ENCODE measurements at regions of chr1 and their contacts with region 1.

Region 1: GRCh38 chr1:39098546-39099250 is 72.5 kb downstream of the NDUFS5 start:
- DNase-seq: peak; percentile 30
- ATAC-seq: peak; percentile 22
- H3K4me3 Mint-ChIP-seq: no peak overlapping the region
- H3K27ac Mint-ChIP-seq: no peak overlapping the region
- H3K4me1 Mint-ChIP-seq: peaks cover 26% of the 10 kb centered on the region
- H3K27me3 Mint-ChIP-seq: no peaks in the 10 kb centered on the region
- CTCF ChIP-seq: no peak

Region 2: DNA sequence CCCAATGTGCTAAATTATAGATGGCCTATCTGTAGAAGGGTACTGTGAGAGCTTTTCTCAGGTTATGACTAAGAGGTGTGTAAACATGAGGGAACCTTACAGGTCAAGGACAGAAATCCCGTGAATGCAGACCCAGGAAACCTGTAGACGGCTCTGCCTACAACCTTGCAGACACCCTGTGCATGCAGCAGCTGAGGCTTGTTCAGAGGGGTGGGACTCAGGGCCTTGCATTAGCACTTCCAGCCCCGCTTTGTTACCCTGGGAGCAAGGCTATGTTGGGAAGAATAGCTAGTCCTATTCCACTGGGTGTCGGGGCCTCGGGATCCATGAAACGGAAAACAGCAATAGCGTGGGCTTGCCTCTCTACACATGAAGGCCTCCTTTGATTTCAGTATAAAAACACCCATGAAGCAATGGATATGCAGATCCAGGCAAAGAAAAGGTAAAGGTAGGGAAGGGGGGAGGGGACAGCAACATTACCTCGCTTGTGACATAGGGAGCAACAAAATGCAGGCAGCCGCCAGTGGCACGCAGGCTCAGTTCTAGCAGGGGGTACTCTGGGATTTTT is 82.0 kb before region 1 on chr1:
- CTCF ChIA-PET with region 1: no interaction called
- POLR2A ChIA-PET with region 1: no interaction called
- intact Hi-C with region 1: no loop called
- DNase-seq: no peak
- ATAC-seq: no peak
- H3K4me3 Mint-ChIP-seq: no peak overlapping the region
- H3K27ac Mint-ChIP-seq: no peak overlapping the region
- H3K4me1 Mint-ChIP-seq: no peaks in the 10 kb centered on the region
- H3K27me3 Mint-ChIP-seq: no peaks in the 10 kb centered on the region
- CTCF ChIP-seq: no peak

Region 3: GRCh38 chr1:39116868-39117728 is 18.4 kb after region 1 on chr1:
- CTCF ChIA-PET with region 1: interaction called, 7 read pairs
- POLR2A ChIA-PET with region 1: no interaction called
- intact Hi-C with region 1: loop called (anchors 2 kb)
- DNase-seq: no peak
- ATAC-seq: no peak
- H3K4me3 Mint-ChIP-seq: no peak overlapping the region
- H3K27ac Mint-ChIP-seq: no peak overlapping the region
- H3K4me1 Mint-ChIP-seq: no peaks in the 10 kb centered on the region
- H3K27me3 Mint-ChIP-seq: no peaks in the 10 kb centered on the region
- CTCF ChIP-seq: no peak

Region 4: GRCh38 chr1:39196244-39197215 is 97.8 kb after region 1 on chr1:
- CTCF ChIA-PET with region 1: interaction called, 86 read pairs
- POLR2A ChIA-PET with region 1: interaction called, 14 read pairs
- intact Hi-C with region 1: loop called (anchors 1 kb)
- DNase-seq: no peak
- ATAC-seq: peak; percentile 35
- H3K4me3 Mint-ChIP-seq: peak overlapping the region; percentile 61
- H3K27ac Mint-ChIP-seq: peak overlapping the region; percentile 91
- H3K4me1 Mint-ChIP-seq: peaks cover 76% of the 10 kb centered on the region
- H3K27me3 Mint-ChIP-seq: no peaks in the 10 kb centered on the region
- CTCF ChIP-seq: no peak

Region 5: DNA sequence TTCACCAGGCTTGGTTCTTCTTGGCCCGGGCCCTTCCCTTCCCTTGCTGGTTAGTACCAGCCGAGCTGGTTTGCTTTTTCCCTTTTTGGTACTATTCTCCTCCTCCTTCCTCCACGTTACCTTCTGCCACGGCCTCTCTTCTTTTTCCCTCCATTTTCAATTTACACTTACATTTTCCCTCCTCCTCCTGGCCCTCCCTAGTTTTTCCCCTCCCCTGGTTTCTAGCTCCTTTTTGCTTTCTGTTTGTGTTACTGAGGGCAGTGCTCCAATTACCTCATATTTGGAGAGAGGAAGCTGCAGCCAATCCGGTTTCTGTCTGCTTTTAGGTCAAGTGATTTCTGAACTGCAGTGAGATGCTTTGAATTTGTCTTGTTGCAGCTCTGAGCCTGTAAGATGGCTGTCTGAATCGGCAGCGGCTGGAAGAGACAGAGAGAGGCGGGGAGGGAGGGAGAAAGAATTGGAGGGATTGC is 169.4 kb after region 1 on chr1:
- CTCF ChIA-PET with region 1: interaction called, 109 read pairs
- POLR2A ChIA-PET with region 1: interaction called, 10 read pairs
- intact Hi-C with region 1: loop called (anchors 1 kb)
- DNase-seq: no peak
- ATAC-seq: no peak
- H3K4me3 Mint-ChIP-seq: peak overlapping the region; percentile 82
- H3K27ac Mint-ChIP-seq: peak overlapping the region; percentile 84
- H3K4me1 Mint-ChIP-seq: peaks cover 65% of the 10 kb centered on the region
- H3K27me3 Mint-ChIP-seq: no peaks in the 10 kb centered on the region
- CTCF ChIP-seq: no peak

Region 6: DNA sequence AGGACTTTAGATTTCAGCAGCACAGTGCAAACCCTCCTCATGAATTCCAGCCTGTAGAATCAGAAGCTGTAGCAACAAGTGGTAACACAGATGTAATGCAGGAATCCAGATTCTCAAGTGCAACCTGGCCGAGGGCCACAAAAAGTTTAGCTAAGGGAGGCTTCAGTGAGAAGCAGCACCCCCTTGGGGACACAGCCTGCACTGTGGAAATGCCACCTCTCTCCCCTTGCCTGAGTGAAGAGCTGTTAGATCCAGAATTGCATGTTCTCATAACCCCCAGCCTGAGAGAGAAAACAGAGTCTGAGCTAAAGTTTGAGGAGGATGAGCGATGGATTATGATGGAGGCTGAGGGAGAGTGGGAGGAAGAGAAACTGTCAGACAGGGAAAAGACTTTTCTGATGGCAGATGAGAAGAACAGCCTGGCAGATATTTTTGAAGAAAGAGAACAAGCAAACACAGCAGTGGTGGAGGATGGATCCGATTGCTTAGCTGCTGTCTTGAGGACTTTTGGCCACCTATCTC is 312.3 kb after region 1 on chr1:
- CTCF ChIA-PET with region 1: interaction called, 20 read pairs
- POLR2A ChIA-PET with region 1: no interaction called
- intact Hi-C with region 1: loop called (anchors 1 kb)
- DNase-seq: no peak
- ATAC-seq: no peak
- H3K4me3 Mint-ChIP-seq: peak overlapping the region; percentile 4
- H3K27ac Mint-ChIP-seq: no peak overlapping the region
- H3K4me1 Mint-ChIP-seq: peaks cover 26% of the 10 kb centered on the region
- H3K27me3 Mint-ChIP-seq: no peaks in the 10 kb centered on the region
- CTCF ChIP-seq: no peak

Region 7: GRCh38 chr1:39653546-39654031 is 554.9 kb after region 1 on chr1:
- CTCF ChIA-PET with region 1: no interaction called
- POLR2A ChIA-PET with region 1: no interaction called
- intact Hi-C with region 1: loop called (anchors 1 kb)
- DNase-seq: peak; percentile 53
- ATAC-seq: peak; percentile 80
- H3K4me3 Mint-ChIP-seq: no peak overlapping the region
- H3K27ac Mint-ChIP-seq: no peak overlapping the region
- H3K4me1 Mint-ChIP-seq: peaks cover 7% of the 10 kb centered on the region
- H3K27me3 Mint-ChIP-seq: peaks cover 14% of the 10 kb centered on the region
- CTCF ChIP-seq: peak; percentile 75

Measured in activated B cell treated with CpG ODN at 0.5 μM for 24 hours (primary cell).